ENCODE measurements at regions of chr12 and their contacts with region 1.

Region 1: GRCh38 chr12:8078398-8078797 is 3.7 kb upstream of the NECAP1 start:
- DNase-seq: peak; percentile 75
- H3K4me3 Mint-ChIP-seq: no peak overlapping the region
- H3K27ac Mint-ChIP-seq: peak overlapping the region; percentile 57
- H3K4me1 Mint-ChIP-seq: peaks cover 45% of the 10 kb centered on the region
- H3K27me3 Mint-ChIP-seq: no peaks in the 10 kb centered on the region

Region 2: DNA sequence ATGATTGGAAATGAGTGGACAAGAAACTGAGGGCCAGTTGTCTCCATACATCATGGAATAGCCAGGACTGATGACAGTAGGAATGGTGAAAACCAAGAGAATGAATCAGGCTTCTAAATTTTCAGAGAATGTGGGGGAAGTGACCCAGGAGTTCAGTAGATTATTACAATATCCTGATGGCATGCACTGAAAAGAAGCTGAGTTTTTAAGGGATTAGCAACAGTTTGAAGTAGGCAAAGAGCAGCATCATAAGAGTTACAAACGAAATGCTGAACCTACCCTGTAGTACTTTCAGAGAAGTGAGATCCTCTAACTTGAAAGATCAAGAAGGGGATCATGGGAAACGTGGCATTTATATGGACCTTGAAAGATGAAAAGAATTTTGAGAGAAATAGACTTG is 218.8 kb before region 1 on chr12:
- CTCF ChIA-PET with region 1: interaction called, 18 read pairs
- POLR2A ChIA-PET with region 1: no interaction called
- intact Hi-C with region 1: loop called (anchors 1 kb)
- DNase-seq: no peak
- H3K4me3 Mint-ChIP-seq: no peak overlapping the region
- H3K27ac Mint-ChIP-seq: no peak overlapping the region
- H3K4me1 Mint-ChIP-seq: peaks cover 13% of the 10 kb centered on the region
- H3K27me3 Mint-ChIP-seq: peaks cover 4% of the 10 kb centered on the region

Region 3: DNA sequence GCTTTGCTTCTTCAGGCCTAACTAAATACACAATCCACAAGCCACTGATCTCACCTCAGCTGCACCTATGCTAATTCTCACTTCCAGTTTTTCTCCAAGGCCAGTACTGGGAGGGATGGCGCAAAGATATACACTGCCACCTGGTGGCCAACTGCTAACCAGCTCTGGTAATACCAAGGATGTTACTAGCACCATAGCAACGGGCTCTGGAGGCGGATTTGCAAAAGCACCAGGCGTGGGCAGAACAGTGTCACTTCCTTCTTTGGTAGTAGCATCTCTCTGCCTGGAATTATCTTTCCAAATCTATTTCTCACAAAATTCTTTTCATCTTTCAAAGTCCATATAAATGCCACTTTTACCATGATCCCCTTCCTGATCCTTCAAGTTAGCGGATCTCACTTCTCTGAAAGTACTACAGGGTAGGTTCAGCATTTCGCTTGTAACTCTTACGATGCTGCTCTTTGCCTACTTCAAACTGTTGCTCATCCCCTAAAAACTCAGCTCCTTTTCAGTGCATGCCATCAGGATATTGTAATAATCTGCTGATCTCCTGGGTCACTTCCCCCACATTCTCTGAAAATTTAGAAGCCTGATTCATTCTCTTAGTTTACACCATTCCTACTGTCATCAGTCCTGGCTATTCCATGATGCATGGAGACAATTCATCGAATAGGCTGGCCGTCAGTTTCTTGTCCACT is 83.0 kb before region 1 on chr12:
- CTCF ChIA-PET with region 1: interaction called, 11 read pairs
- POLR2A ChIA-PET with region 1: interaction called, 5 read pairs
- intact Hi-C with region 1: no loop called
- DNase-seq: peak; percentile 93
- H3K4me3 Mint-ChIP-seq: no peak overlapping the region
- H3K27ac Mint-ChIP-seq: no peak overlapping the region
- H3K4me1 Mint-ChIP-seq: peaks cover 24% of the 10 kb centered on the region
- H3K27me3 Mint-ChIP-seq: no peaks in the 10 kb centered on the region

Region 4: DNA sequence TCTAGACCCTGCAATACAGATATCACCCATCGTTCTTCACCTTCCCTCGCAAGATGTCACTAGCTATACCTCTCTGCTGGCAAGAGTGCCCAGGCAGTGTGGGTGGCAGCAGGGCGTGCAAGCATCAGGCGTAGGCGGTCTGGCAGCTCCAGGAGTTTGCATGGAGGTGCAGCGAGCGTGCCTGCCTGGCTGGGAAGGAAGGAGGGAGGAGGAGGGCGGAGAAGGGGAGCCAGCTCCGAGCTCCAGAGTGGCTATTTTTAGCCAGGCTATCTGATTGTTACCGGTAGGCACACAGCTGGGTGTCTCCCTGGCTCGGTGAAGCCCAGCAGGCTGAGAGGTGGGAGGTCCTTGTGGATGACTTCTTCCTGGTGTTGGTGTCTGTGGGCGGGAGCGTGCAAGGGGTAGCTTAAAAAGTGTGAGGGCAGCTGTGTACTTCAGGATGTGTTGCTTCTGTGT is 39.7 kb before region 1 on chr12:
- CTCF ChIA-PET with region 1: interaction called, 263 read pairs
- POLR2A ChIA-PET with region 1: interaction called, 3 read pairs
- intact Hi-C with region 1: no loop called
- DNase-seq: peak; percentile 59
- H3K4me3 Mint-ChIP-seq: peak overlapping the region; percentile 40
- H3K27ac Mint-ChIP-seq: no peak overlapping the region
- H3K4me1 Mint-ChIP-seq: peaks cover 54% of the 10 kb centered on the region
- H3K27me3 Mint-ChIP-seq: no peaks in the 10 kb centered on the region

Region 5: DNA sequence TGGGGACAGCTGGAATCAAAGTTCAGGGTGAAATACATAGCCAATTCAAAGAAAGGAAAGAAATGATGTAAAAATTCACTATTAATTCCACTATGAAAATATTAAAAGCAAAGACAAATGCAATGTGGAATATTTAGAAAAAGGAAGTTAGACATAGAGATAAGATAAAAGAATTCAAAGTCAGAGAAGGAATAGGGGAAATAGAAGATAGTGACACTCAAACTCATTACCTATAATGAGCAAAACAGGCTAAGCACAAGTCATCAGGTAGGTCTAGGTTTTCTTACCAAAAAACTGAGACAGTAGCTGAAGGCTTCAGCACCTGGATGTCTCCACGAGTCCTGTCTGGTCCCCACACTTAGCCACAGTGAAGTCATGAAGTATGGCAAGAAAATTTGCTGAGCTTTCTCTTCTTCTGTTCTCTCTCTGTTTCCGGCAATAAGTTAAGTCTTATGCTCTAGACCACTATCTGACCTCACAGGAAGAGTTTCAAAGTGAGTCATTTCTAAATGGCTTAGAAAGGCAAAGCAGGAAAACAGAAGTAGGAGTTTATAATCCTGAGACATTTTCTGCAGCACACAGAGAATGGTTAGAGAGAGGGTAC is 12.3 kb before region 1 on chr12 and contains the start of gene C3AR1:
- CTCF ChIA-PET with region 1: interaction called, 28 read pairs
- POLR2A ChIA-PET with region 1: interaction called, 3 read pairs
- intact Hi-C with region 1: loop called (anchors 1 kb)
- DNase-seq: peak; percentile 55
- H3K4me3 Mint-ChIP-seq: peak within 1 kb of the TSS; percentile 31
- H3K27ac Mint-ChIP-seq: peak within 1 kb of the TSS; percentile 63
- H3K4me1 Mint-ChIP-seq: peaks cover 40% of the 10 kb centered on the region
- H3K27me3 Mint-ChIP-seq: no peaks in the 10 kb centered on the region
- total RNA-seq, gene C3AR1: 0.94 to 0.97 TPM

Region 6: DNA sequence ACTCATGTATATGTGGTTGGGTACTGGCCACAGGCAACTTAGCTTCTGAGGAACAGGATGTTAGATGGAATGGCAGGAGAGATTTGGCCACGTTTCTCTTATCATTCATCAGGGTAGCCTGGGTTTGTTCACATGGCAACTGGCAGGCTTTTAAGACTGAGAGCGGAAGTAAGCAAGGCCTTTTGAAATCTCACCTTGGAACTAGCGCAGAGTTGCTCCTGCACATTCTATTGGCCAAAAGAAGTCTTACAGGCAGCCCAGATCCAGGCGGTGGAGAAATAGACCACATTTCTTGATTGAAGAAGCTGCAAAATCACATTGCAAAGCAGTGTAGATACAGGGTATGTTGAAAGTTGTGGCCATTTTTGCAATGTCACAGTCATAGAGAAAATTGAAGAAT is 48.7 kb after region 1 on chr12:
- CTCF ChIA-PET with region 1: no interaction called
- POLR2A ChIA-PET with region 1: no interaction called
- intact Hi-C with region 1: no loop called
- DNase-seq: peak; percentile 11
- H3K4me3 Mint-ChIP-seq: no peak overlapping the region
- H3K27ac Mint-ChIP-seq: no peak overlapping the region
- H3K4me1 Mint-ChIP-seq: peaks cover 10% of the 10 kb centered on the region
- H3K27me3 Mint-ChIP-seq: no peaks in the 10 kb centered on the region